ENCODE measurements at regions of chr20 and their contacts with region 1.

Region 1: GRCh38 chr20:58179432-58180099 is 48.9 kb downstream of the ANKRD60 start:
- DNase-seq: peak; percentile 42 to 71
- H3K4me3 ChIP-seq: peak overlapping the region in 1 of 2 donors; percentile 30
- H3K27ac ChIP-seq: peak overlapping the region in 1 of 2 donors; percentile 13
- H3K4me1 ChIP-seq: no peaks in the 10 kb centered on the region
- H3K27me3 ChIP-seq: no peaks in the 10 kb centered on the region
- CTCF ChIP-seq: peak; percentile 91 to 99 (median 96)
- POLR2A ChIP-seq: no peak

Region 2: DNA sequence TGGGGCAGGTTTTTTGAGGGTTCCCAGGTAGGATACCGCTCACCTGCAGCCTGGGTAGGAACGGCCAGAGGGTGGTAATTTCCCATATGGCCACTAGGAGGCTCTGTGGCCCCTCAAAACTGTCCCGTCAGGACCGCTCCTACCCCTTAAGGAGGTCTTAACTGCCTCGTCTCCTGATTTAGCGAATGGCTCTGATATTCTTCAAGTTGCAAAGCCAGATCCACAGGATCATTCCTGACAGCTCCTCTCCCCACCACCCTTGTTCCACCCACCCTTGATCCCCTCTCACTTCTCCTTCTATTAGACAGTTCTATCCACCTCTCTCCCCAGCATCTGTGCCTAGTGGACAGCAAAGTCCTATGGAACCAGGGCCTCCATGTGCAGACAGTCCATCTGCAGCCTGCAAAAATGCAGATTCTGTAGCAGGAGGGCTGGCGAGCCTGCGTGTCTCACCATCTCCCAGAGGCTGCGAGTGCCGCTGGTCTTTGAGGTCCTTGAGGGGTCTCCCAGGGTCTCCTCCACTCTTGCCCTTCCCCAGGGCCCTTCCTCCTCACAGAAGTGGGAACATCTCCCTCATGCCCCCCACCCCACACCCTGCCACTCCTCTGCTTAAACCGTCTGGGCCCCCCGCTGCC is 525.1 kb before region 1 on chr20:
- intact Hi-C with region 1: loop called (anchors 1 kb)
- DNase-seq: peak; percentile 62 to 67
- H3K4me3 ChIP-seq: no peak overlapping the region
- H3K27ac ChIP-seq: peak overlapping the region; percentile 15 to 35
- H3K4me1 ChIP-seq: no peaks in the 10 kb centered on the region
- H3K27me3 ChIP-seq: no peaks in the 10 kb centered on the region
- CTCF ChIP-seq: peak; percentile 89 to 95 (median 92)
- POLR2A ChIP-seq: no peak